HCT116 (cell line): ENCODE measurements at regions of chr12 and their contacts with region 1.

Region 1: DNA sequence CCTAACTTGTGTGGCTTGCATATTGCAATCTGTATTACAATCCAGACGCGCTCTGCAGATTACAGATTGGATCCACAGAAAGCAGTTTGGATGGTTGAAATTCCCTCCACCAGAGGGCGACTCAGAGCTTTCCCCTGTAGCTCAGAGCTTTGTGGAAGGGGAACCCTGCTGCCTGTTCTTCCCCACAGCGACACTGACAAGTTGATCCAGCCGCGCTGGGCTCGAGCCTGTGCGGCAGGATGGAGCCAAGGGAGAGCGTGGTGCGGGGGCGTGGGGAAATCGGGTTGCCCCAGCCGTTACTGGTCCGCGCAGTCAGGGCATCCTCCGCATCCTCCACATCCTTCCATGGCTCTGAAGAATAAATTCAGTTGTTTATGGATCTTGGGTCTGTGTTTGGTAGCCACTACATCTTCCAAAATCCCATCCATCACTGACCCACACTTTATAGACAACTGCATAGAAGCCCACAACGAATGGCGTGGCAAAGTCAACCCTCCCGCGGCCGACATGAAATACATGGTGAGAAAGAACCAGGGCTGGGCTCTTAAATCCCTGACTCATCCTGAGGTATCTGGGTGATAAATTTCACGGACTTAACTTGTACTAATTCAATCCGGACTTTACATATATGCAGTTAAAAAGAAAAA is at the start of gene GLIPR1L1:
- DNase-seq: peak; percentile 92
- ATAC-seq: peak; percentile 86
- H3K4me3 ChIP-seq: peak within 1 kb of the TSS; percentile 42 to 57
- H3K27ac ChIP-seq: peak within 1 kb of the TSS; percentile 63
- H3K4me1 ChIP-seq: peaks cover 16 to 25% of the 10 kb centered on the region in 2 experiments
- H3K27me3 ChIP-seq: no peaks in the 10 kb centered on the region
- CTCF ChIP-seq: peak; percentile 75 to 83 (median 75)
- POLR2A ChIP-seq: no peak
- RAD21 ChIP-seq: peak; percentile 86
- total RNA-seq, gene GLIPR1L1: not detected

Region 2: DNA sequence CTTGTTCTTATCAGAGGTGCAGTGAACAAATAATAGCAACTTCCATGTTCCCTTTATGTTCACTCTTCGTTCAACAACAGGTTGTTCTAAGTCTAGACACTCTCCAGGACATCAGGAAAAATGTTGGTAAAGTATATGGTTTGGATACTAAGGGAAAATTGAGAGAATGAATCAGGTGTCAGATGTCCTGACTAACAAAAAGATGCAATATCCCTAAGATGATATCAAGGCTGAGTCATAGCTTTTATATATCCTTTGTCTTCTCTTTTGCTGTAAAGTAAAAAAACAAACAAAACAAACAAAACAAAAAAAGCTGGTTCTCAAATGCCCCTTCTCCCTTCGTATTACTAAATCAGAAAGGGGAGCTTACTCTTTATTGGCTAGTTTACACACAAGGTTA is 11.0 kb after region 1 on chr12:
- CTCF ChIA-PET with region 1: interaction called, 16 read pairs
- POLR2A ChIA-PET with region 1: no interaction called
- RAD21 ChIA-PET with region 1: no interaction called
- intact Hi-C with region 1: no loop called
- DNase-seq: peak; percentile 33
- ATAC-seq: peak; percentile 32; the same call in 1 of the 2 replicates
- H3K4me3 ChIP-seq: peak overlapping the region in 1 of 2 experiments; percentile 21; a peak in 1 of 4 replicates
- H3K27ac ChIP-seq: peak overlapping the region; percentile 55; the same call in 1 of the 2 replicates
- H3K4me1 ChIP-seq: peaks cover 43 to 60% of the 10 kb centered on the region in 2 experiments
- H3K27me3 ChIP-seq: no peaks in the 10 kb centered on the region
- CTCF ChIP-seq: no peak
- POLR2A ChIP-seq: no peak
- RAD21 ChIP-seq: no peak

Region 3: GRCh38 chr12:75390899-75391538 is 56.5 kb after region 1 on chr12 and contains the start of gene GLIPR1L2:
- CTCF ChIA-PET with region 1: interaction called, 15 read pairs
- POLR2A ChIA-PET with region 1: interaction called, 3 read pairs
- RAD21 ChIA-PET with region 1: interaction called in 1 of 2 experiments, 3 read pairs
- intact Hi-C with region 1: no loop called
- DNase-seq: peak; percentile 98
- ATAC-seq: peak; percentile 94
- H3K4me3 ChIP-seq: peak within 1 kb of the TSS; percentile 49 to 63
- H3K27ac ChIP-seq: peak within 1 kb of the TSS; percentile 77
- H3K4me1 ChIP-seq: peaks cover 26 to 46% of the 10 kb centered on the region in 2 experiments
- H3K27me3 ChIP-seq: no peaks in the 10 kb centered on the region
- CTCF ChIP-seq: peak; percentile 61 to 94 (median 84); a peak in 5 of 6 replicates
- POLR2A ChIP-seq: peak; percentile 23
- RAD21 ChIP-seq: peak; percentile 73
- total RNA-seq, gene GLIPR1L2: 0.44 TPM

Region 4: GRCh38 chr12:75489613-75490210 is 155.2 kb after region 1 on chr12:
- CTCF ChIA-PET with region 1: no interaction called
- POLR2A ChIA-PET with region 1: no interaction called
- RAD21 ChIA-PET with region 1: no interaction called
- intact Hi-C with region 1: loop called (anchors 5 kb)
- DNase-seq: peak; percentile 62
- ATAC-seq: peak; percentile 64
- H3K4me3 ChIP-seq: peak overlapping the region in 1 of 2 experiments; percentile 9; a peak in 1 of 4 replicates
- H3K27ac ChIP-seq: peak overlapping the region; percentile 82
- H3K4me1 ChIP-seq: peaks cover 27 to 50% of the 10 kb centered on the region in 2 experiments
- H3K27me3 ChIP-seq: no peaks in the 10 kb centered on the region
- CTCF ChIP-seq: no peak
- POLR2A ChIP-seq: no peak
- RAD21 ChIP-seq: no peak

Region 5: DNA sequence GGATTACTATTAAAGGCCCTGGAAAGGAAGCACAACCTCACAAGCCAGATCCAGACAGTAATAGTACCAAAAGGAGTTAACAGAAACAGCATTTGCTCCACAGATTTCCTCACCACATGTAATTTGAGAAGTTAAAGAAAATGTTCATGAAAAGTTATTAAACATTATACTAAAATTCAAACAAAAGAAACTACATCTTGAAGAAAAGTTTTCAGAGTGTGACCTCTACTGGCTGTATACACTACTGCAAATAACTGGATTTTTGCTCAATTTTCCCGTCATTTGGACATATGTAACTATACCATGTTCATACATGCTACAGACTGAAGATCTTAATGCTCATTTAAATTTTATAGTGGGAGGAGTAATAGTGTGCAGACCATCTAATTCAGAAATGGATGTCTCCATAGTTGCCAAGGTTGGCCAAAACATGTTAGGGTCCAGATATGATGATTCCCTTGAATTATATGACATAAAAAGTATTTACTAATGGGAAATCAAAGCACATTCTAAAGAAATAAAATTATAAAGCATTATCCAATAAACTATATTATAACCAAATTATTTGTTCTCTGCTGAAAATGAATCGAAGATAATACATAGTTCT is 171.3 kb after region 1 on chr12:
- CTCF ChIA-PET with region 1: interaction called, 4 read pairs
- POLR2A ChIA-PET with region 1: no interaction called
- RAD21 ChIA-PET with region 1: no interaction called
- intact Hi-C with region 1: loop called (anchors 5 kb)
- DNase-seq: no peak
- ATAC-seq: peak; percentile 59; the same call in 1 of the 2 replicates
- H3K4me3 ChIP-seq: no peak overlapping the region
- H3K27ac ChIP-seq: no peak overlapping the region
- H3K4me1 ChIP-seq: peaks cover 13 to 22% of the 10 kb centered on the region in 2 experiments; a peak in 2 of 4 replicates
- H3K27me3 ChIP-seq: no peaks in the 10 kb centered on the region
- CTCF ChIP-seq: peak; percentile 36 to 69 (median 51); a peak in 4 of 6 replicates
- POLR2A ChIP-seq: no peak
- RAD21 ChIP-seq: peak; percentile 63